ENCODE measurements at regions of chr6 and their contacts with region 1.

Region 1: GRCh38 chr6:100116411-100117194 is 122.6 kb upstream of the MCHR2 start:
- DNase-seq: no peak
- ATAC-seq: no peak
- H3K4me3 ChIP-seq: no peak overlapping the region
- H3K27ac ChIP-seq: no peak overlapping the region
- H3K4me1 ChIP-seq: no peaks in the 10 kb centered on the region
- H3K27me3 ChIP-seq: peaks cover 0 to 8% (median 0%) of the 10 kb centered on the region in 9 donors
- CTCF ChIP-seq: peak; percentile 32 to 70 (median 56)
- POLR2A ChIP-seq: no peak

Region 2: DNA sequence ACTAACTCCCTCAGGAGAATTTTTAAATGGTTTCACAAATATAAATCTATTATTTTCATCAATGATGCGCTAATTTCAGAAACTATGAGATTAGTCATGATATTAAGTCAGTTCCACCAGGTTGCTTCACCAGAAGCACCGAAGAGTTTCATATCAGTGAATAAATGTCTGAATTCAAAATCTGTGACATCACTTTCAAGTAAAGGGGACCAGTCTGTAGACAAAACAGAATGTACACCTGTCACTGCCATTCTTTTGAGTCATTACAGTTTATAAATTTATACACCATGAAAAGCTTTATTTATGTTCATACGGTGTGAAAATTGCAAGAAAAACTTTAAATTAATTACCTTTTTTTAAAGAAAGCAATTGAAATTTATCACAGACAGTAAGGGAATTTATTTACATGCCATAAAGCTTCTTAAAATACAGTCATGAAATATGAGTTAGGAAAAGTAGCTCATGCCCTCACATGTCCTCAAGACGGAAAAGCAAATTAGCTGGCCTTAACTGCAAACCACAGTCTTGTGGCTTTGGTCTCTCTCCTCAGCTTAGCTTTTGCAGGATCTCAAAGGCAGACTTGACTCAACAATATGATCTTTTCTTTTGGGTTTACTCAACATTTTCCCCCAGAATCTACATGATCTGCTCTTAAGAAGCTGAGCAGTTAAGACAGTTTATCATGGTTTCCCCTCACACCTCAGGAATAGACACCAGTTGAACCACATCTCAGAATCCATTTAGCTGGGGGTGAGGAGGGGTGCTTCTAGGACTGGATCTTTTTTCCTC is 55.1 kb after region 1 on chr6:
- intact Hi-C with region 1: no loop called
- DNase-seq: no peak
- ATAC-seq: no peak
- H3K4me3 ChIP-seq: no peak overlapping the region
- H3K27ac ChIP-seq: no peak overlapping the region
- H3K4me1 ChIP-seq: peaks cover 0 to 16% (median 0%) of the 10 kb centered on the region in 12 donors
- H3K27me3 ChIP-seq: no peaks in the 10 kb centered on the region
- CTCF ChIP-seq: no peak
- POLR2A ChIP-seq: no peak

Region 3: GRCh38 chr6:100479179-100480035 is 362.8 kb after region 1 on chr6:
- intact Hi-C with region 1: loop called (anchors 1 to 5 kb)
- DNase-seq: no peak
- ATAC-seq: no peak
- H3K4me3 ChIP-seq: no peak overlapping the region
- H3K27ac ChIP-seq: no peak overlapping the region
- H3K4me1 ChIP-seq: no peaks in the 10 kb centered on the region
- H3K27me3 ChIP-seq: peaks cover 0 to 28% (median 6%) of the 10 kb centered on the region in 9 donors
- CTCF ChIP-seq: peak; percentile 47 to 76 (median 59)
- POLR2A ChIP-seq: no peak

Region 4: DNA sequence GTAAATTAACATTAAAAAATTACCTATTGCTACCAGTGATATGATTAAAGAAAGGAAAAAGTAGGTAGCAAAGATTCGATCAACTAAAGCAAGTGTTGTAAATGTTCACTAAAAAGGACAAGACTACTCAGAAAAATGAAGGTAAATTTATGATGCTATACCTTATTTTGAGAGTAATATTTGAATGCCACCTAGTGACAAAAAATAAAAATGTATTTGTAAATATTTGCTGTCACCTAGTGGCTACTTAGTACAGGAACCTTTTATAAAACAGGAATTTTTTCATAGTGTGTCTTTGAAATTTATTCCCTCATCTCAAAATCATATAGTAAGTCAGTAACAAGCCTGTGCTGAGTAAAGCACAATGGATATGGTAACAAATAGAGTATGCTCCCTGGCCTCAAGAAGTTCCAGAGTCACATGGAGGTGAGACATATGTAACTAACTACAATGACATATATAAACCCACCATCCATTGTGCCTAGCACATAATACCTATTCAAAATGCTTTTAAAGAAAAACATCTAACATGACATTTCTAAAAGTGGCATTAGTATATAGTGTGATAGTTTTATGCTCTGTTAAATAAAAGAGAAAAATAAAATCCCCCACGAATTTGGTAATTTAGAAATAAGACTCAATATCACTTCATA is 541.2 kb after region 1 on chr6:
- intact Hi-C with region 1: loop called in 8 of 10 experiments (anchors 5 to 10 kb)
- DNase-seq: no peak
- ATAC-seq: no peak
- H3K4me3 ChIP-seq: no peak overlapping the region
- H3K27ac ChIP-seq: no peak overlapping the region
- H3K4me1 ChIP-seq: no peaks in the 10 kb centered on the region
- H3K27me3 ChIP-seq: no peaks in the 10 kb centered on the region
- CTCF ChIP-seq: peak in 8 of 12 donors; percentile 22 to 51 (median 42)
- POLR2A ChIP-seq: no peak